SK-N-SH (cell line): ENCODE measurements at regions of chr1 and their contacts with region 1.

Region 1: DNA sequence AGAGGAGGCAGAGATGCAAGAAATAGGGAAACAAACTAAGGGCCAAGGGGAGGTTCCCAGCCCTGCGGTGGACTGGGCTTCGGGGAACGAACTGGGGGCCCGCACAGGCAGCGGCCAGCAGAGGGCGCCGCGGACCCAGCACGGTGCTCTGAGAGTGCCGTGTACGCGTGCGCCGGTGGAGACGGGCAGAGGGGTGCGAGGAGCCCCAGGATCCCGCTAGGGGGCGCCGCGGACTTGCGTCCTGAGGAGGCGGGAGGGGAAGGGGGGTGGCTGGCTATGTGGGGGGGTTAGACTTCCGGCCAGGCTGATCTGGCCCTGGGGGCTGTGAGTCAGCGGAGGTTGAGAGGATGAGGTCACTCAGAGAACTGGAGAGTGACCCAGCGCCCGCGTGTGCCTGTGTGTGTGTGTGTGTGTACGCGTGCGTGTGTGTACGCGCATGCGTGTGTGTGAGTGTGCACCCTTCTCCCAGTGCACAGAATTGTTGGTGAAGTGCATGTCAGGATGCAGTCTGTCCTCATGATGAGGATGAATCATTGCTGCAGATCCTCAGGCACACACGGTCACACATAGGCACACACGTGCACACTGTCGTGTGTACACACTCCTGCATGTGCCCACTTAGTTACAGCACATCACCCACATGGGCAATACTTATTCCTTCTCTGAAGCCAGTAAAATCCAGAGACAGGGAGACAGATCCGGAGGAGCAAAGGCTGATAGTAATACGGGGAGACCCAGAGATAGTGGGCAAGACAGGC is 17.0 kb downstream of the NES start:
- DNase-seq: peak; percentile 99
- H3K4me3 ChIP-seq: peak overlapping the region; percentile 34 to 54; a peak in 2 of 4 replicates
- H3K27ac ChIP-seq: peak overlapping the region; percentile 72 to 87
- H3K4me1 ChIP-seq: peaks cover 44 to 48% of the 10 kb centered on the region in 2 experiments; a peak in 3 of 4 replicates
- H3K27me3 ChIP-seq: no peaks in the 10 kb centered on the region
- CTCF ChIP-seq: peak; percentile 99
- EP300 ChIP-seq: peak in 1 of 2 experiments; percentile 37; a peak in 1 of 4 replicates
- RAD21 ChIP-seq: peak; percentile 90

Region 2: GRCh38 chr1:156641761-156642264 is 18.4 kb before region 1 on chr1 and contains the start of gene BCAN:
- CTCF ChIA-PET with region 1: interaction called, 252 read pairs
- POLR2A ChIA-PET with region 1: no interaction called
- DNase-seq: peak; percentile 86
- H3K4me3 ChIP-seq: peak within 1 kb of the TSS; percentile 39 to 46
- H3K27ac ChIP-seq: no peak within 1 kb of the TSS
- H3K4me1 ChIP-seq: peaks cover 0 to 34% of the 10 kb centered on the region in 2 experiments; a peak in 1 of 4 replicates
- H3K27me3 ChIP-seq: peaks cover 35% of the 10 kb centered on the region
- CTCF ChIP-seq: no peak
- EP300 ChIP-seq: no peak
- RAD21 ChIP-seq: no peak
- polyA plus RNA-seq, gene BCAN: 0.13 and 0.25 TPM in 2 replicates

Region 3: DNA sequence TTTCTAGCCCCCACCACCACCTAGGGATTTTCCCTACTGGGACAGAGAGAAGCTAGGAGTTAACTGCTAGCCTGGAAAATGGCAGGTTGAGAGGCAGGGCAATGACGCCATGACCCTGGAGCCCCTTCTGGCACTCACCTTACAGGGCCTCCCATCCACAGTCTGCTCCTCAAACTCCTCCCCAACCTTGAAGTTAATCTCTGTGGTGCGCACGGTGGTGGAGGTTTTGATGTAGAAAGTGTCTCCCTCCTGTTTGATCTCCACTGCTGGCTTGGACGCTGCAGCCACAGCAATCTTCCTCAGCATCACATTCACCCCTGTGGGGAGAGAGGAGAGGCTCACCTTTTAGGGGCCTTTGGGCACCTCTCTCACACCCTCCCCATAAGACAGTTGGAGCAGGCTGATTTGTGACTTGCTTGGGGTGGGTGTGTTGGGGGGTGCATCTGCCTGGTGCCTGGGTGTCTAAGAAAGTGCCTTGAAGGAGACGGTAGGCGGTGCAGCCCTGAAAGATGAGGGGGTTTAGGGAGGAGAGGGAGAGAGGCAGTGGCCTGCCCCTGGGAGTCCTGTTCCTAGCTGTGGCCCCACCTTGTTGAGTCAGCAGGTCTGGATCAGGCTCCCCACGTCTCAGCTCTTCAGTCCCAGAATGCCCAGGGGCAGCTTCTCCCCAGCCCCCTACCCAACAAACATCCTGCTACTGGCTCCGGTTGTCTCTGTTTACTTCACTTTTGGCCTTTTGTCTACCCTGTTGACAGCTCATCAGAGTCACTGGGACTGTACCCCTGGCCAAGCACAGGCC is 40.8 kb after region 1 on chr1:
- CTCF ChIA-PET with region 1: interaction called, 10 read pairs
- POLR2A ChIA-PET with region 1: interaction called, 3 read pairs
- DNase-seq: no peak
- H3K4me3 ChIP-seq: no peak overlapping the region
- H3K27ac ChIP-seq: peak overlapping the region in 1 of 2 experiments; percentile 1; a peak in 1 of 4 replicates
- H3K4me1 ChIP-seq: peaks cover 26 to 62% of the 10 kb centered on the region in 2 experiments
- H3K27me3 ChIP-seq: no peaks in the 10 kb centered on the region
- CTCF ChIP-seq: no peak
- EP300 ChIP-seq: no peak
- RAD21 ChIP-seq: no peak